CD8-positive, alpha-beta T cell (primary cell): ENCODE measurements at regions of chr10 and their contacts with region 1.

Region 1: DNA sequence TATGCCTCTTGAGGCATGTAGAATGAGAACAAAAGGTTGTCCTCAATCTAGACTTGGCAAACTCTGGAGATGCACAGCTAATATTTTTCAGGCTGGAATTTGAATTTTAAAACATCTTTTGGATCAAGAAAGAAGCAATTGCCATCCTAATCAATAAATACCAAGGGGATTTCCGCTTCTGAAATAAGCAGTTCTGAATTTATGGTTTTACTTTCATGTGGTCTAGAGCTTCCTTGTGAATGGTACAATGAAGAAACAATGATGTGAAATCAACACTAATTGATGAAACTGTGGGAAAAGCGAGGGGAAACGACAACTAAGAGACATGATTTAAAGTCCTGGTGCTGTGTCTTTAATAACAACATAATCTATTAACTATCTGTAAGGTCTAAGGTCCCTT is 1202.7 kb downstream of the SORCS3 start:
- DNase-seq: no peak
- ATAC-seq: no peak
- H3K4me3 ChIP-seq: no peak overlapping the region
- H3K4me3 Mint-ChIP-seq: no peak overlapping the region
- H3K27ac ChIP-seq: no peak overlapping the region
- H3K27ac Mint-ChIP-seq: no peak overlapping the region
- H3K4me1 ChIP-seq: no peaks in the 10 kb centered on the region
- H3K4me1 Mint-ChIP-seq: peaks cover 4% of the 10 kb centered on the region
- H3K27me3 ChIP-seq: no peaks in the 10 kb centered on the region
- H3K27me3 Mint-ChIP-seq: no peaks in the 10 kb centered on the region
- CTCF ChIP-seq: no peak

Region 2: GRCh38 chr10:105597312-105597711 is 246.5 kb before region 1 on chr10:
- CTCF ChIA-PET with region 1: no interaction called
- POLR2A ChIA-PET with region 1: no interaction called
- intact Hi-C with region 1: no loop called
- DNase-seq: no peak
- ATAC-seq: no peak
- H3K4me3 ChIP-seq: no peak overlapping the region
- H3K4me3 Mint-ChIP-seq: no peak overlapping the region
- H3K27ac ChIP-seq: no peak overlapping the region
- H3K27ac Mint-ChIP-seq: no peak overlapping the region
- H3K4me1 ChIP-seq: no peaks in the 10 kb centered on the region
- H3K4me1 Mint-ChIP-seq: no peaks in the 10 kb centered on the region
- H3K27me3 ChIP-seq: no peaks in the 10 kb centered on the region
- H3K27me3 Mint-ChIP-seq: no peaks in the 10 kb centered on the region
- CTCF ChIP-seq: no peak

Region 3: GRCh38 chr10:105857268-105858264 is 13.8 kb after region 1 on chr10:
- CTCF ChIA-PET with region 1: no interaction called
- POLR2A ChIA-PET with region 1: no interaction called
- intact Hi-C with region 1: loop called in 1 of 2 experiments (anchors 1 kb)
- DNase-seq: no peak
- ATAC-seq: no peak
- H3K4me3 ChIP-seq: no peak overlapping the region
- H3K4me3 Mint-ChIP-seq: no peak overlapping the region
- H3K27ac ChIP-seq: no peak overlapping the region
- H3K27ac Mint-ChIP-seq: no peak overlapping the region
- H3K4me1 ChIP-seq: no peaks in the 10 kb centered on the region
- H3K4me1 Mint-ChIP-seq: peaks cover 2% of the 10 kb centered on the region
- H3K27me3 ChIP-seq: no peaks in the 10 kb centered on the region
- H3K27me3 Mint-ChIP-seq: no peaks in the 10 kb centered on the region
- CTCF ChIP-seq: no peak

Region 4: DNA sequence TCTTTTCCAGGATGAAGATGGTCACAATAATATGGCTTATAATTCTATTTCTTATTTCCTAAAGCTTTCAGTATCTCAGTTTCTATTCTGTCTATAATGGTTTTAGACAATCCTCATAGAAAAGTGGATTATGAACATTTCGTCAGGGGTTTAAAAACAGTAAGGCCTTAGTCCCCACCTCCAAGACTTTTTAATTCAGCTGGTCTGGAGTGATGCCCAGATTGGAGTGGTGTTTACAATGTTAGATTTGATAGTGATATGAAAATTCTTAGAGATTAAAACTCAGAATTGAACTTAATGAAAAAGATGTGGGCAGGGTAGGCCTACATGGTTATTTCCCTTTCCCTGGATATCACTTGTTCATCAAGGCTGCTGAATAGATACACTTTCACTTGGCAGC is 35.6 kb after region 1 on chr10:
- CTCF ChIA-PET with region 1: no interaction called
- POLR2A ChIA-PET with region 1: no interaction called
- intact Hi-C with region 1: no loop called
- DNase-seq: no peak
- ATAC-seq: no peak
- H3K4me3 ChIP-seq: no peak overlapping the region
- H3K4me3 Mint-ChIP-seq: no peak overlapping the region
- H3K27ac ChIP-seq: no peak overlapping the region
- H3K27ac Mint-ChIP-seq: no peak overlapping the region
- H3K4me1 ChIP-seq: no peaks in the 10 kb centered on the region
- H3K4me1 Mint-ChIP-seq: no peaks in the 10 kb centered on the region
- H3K27me3 ChIP-seq: no peaks in the 10 kb centered on the region
- H3K27me3 Mint-ChIP-seq: no peaks in the 10 kb centered on the region
- CTCF ChIP-seq: no peak